CD8-positive, alpha-beta T cell (primary cell): ENCODE measurements at regions of chr10 and their contacts with region 1.

Region 1: DNA sequence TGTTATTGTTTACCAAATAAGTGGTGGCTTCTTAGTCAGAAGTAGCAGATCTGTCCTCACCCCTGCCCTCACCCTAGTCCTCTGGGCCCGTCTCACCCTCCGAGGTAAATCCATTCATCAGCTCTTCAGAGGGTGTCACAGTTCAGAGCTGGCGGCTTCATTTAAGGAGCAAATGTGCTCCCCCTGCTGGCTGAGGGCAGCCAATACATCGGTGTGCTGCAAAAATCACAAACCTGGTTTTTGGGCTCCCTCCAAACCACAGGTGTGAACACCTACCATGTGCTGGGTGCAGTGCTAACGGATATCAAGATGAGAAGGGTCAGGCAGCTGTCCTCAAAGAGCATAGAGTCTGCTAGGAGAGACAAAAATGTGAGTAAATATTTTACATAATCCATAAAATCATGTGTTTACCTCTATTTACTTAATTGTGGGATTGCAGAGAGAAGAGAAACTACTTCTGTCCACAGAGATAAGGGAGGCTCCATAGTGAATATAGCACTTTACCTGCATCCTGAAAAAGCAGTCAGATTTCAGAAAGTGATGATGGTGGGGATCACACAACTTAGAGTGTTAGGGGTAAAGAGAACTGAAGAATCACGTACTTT is 15.5 kb upstream of the CRTAC1 start:
- DNase-seq: peak; percentile 21 to 76 (median 54)
- ATAC-seq: peak; percentile 72
- H3K4me3 ChIP-seq: no peak overlapping the region
- H3K4me3 Mint-ChIP-seq: no peak overlapping the region
- H3K27ac ChIP-seq: no peak overlapping the region
- H3K27ac Mint-ChIP-seq: no peak overlapping the region
- H3K4me1 ChIP-seq: peaks cover 6% of the 10 kb centered on the region
- H3K4me1 Mint-ChIP-seq: peaks cover 4% of the 10 kb centered on the region
- H3K27me3 ChIP-seq: peaks cover 3% of the 10 kb centered on the region in 2 experiments
- H3K27me3 Mint-ChIP-seq: peaks cover 30% of the 10 kb centered on the region
- CTCF ChIP-seq: peak; percentile 93

Region 2: DNA sequence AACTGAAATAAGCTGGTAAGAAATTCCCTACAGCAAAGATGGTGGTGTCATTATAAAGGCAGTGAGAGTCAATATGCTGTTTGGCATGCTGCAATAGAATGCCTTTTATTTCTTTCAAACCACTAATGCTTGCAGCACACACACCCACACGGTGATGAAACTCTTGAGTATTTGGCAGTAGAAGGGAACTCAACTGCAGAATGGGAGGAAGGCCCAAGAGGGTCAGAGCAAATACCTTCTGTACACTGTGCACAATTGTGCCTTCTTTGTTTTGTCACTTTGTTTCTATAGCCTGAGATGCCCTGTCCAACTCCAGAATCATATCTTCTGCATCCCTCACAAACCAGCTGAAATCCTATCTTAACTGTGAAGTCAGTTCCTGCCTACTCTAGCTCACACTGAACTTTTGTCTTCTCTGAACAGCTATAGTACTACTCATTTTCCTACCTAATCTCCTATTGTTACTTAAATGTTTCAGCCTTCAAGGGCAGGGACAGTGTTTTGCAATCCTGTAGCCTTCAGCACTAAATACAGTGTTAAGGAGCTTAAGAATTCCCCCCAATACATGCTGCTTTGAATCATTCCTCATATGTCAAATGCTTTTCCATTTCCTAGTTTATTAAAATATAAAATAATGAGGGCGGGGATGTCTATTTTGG is 569.8 kb before region 1 on chr10:
- CTCF ChIA-PET with region 1: no interaction called
- POLR2A ChIA-PET with region 1: no interaction called
- intact Hi-C with region 1: no loop called
- DNase-seq: no peak
- ATAC-seq: no peak
- H3K4me3 ChIP-seq: no peak overlapping the region
- H3K4me3 Mint-ChIP-seq: no peak overlapping the region
- H3K27ac ChIP-seq: no peak overlapping the region
- H3K27ac Mint-ChIP-seq: peak overlapping the region; percentile 37
- H3K4me1 ChIP-seq: no peaks in the 10 kb centered on the region
- H3K4me1 Mint-ChIP-seq: no peaks in the 10 kb centered on the region
- H3K27me3 ChIP-seq: no peaks in the 10 kb centered on the region
- H3K27me3 Mint-ChIP-seq: no peaks in the 10 kb centered on the region
- CTCF ChIP-seq: no peak

Region 3: GRCh38 chr10:97612386-97612785 is 433.5 kb before region 1 on chr10:
- CTCF ChIA-PET with region 1: no interaction called
- POLR2A ChIA-PET with region 1: no interaction called
- intact Hi-C with region 1: no loop called
- DNase-seq: peak in 2 of 9 experiments; percentile 12 to 22
- ATAC-seq: no peak
- H3K4me3 ChIP-seq: no peak overlapping the region
- H3K4me3 Mint-ChIP-seq: no peak overlapping the region
- H3K27ac ChIP-seq: no peak overlapping the region
- H3K27ac Mint-ChIP-seq: no peak overlapping the region
- H3K4me1 ChIP-seq: no peaks in the 10 kb centered on the region
- H3K4me1 Mint-ChIP-seq: no peaks in the 10 kb centered on the region
- H3K27me3 ChIP-seq: no peaks in the 10 kb centered on the region
- H3K27me3 Mint-ChIP-seq: peaks cover 3% of the 10 kb centered on the region
- CTCF ChIP-seq: no peak

Region 4: DNA sequence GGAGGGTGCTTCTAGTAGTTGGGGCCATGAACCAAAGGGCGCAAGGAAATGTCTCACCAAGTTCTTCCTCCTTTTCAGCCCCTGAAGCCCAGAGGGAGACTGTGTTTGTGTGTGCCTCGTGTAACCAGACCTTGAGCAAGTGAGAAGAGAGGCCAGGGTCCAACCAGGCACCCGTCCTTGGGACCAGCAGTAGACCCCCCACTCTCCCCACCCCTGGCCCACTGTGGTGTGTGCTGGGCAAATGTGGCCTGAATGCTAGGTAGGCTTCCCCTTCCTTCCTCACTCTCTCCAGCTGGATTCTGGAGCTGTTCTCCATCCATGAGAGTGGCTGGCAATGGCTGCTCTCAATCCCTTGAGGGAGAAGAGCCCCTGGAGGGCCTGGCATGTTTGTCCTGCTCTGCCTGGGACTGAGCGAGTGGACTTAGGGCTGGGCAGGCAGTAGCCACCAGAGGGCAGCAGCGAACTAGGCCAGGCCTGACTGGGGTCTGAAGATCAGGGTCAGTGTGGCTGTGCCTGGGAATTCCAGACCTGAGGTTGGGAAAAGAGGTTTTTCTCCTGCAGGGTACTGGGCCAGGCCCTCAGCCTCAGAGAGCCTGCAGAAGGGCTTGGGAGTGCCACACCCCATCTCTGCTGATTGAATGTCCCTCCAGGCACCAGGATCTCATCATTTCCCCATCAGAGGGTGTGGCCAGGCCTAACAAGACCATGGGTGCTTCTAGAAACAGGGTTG is 286.6 kb before region 1 on chr10:
- CTCF ChIA-PET with region 1: no interaction called
- POLR2A ChIA-PET with region 1: no interaction called
- intact Hi-C with region 1: loop called in 1 of 2 experiments (anchors 1 kb)
- DNase-seq: peak in 8 of 9 experiments; percentile 27 to 76 (median 58)
- ATAC-seq: peak; percentile 71
- H3K4me3 ChIP-seq: no peak overlapping the region
- H3K4me3 Mint-ChIP-seq: no peak overlapping the region
- H3K27ac ChIP-seq: no peak overlapping the region
- H3K27ac Mint-ChIP-seq: no peak overlapping the region
- H3K4me1 ChIP-seq: peaks cover 7% of the 10 kb centered on the region
- H3K4me1 Mint-ChIP-seq: peaks cover 3% of the 10 kb centered on the region
- H3K27me3 ChIP-seq: no peaks in the 10 kb centered on the region
- H3K27me3 Mint-ChIP-seq: no peaks in the 10 kb centered on the region
- CTCF ChIP-seq: peak; percentile 50

Region 5: DNA sequence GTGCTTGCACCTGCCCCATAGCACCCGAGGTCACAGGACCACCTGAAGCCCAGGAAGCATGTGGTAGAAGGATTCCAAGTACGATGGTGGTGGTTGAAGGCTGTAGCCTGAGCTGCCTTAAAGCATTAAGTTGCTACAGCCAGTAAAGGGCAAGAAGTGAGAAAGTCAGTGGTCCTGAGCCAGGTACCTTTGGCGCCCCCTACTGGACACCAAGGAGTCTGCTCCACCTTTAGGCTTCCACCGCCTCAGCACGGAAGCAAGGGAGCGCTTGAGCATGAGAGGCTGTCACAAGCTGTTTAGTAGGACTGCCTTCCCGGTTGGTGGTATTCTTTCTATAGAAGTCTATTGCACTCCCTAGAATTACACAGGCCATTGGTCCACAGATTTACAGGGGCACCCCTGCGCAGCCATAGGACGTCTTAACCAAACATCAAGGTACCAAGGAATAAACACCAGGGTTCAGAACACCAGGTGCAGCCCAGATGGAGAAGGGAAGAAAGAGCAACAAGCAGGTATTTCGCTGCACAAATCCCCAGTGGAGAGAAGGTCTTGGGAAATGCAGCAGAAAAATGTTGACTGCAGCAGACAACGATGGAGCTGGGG is 17.6 kb before region 1 on chr10:
- CTCF ChIA-PET with region 1: interaction called, 11 read pairs
- POLR2A ChIA-PET with region 1: no interaction called
- intact Hi-C with region 1: no loop called
- DNase-seq: peak; percentile 25 to 74 (median 62)
- ATAC-seq: peak; percentile 66
- H3K4me3 ChIP-seq: no peak overlapping the region
- H3K4me3 Mint-ChIP-seq: no peak overlapping the region
- H3K27ac ChIP-seq: no peak overlapping the region
- H3K27ac Mint-ChIP-seq: no peak overlapping the region
- H3K4me1 ChIP-seq: peaks cover 4% of the 10 kb centered on the region
- H3K4me1 Mint-ChIP-seq: peaks cover 7% of the 10 kb centered on the region
- H3K27me3 ChIP-seq: peaks cover 5 to 23% of the 10 kb centered on the region in 2 experiments
- H3K27me3 Mint-ChIP-seq: peaks cover 53% of the 10 kb centered on the region
- CTCF ChIP-seq: peak; percentile 60

Region 6: DNA sequence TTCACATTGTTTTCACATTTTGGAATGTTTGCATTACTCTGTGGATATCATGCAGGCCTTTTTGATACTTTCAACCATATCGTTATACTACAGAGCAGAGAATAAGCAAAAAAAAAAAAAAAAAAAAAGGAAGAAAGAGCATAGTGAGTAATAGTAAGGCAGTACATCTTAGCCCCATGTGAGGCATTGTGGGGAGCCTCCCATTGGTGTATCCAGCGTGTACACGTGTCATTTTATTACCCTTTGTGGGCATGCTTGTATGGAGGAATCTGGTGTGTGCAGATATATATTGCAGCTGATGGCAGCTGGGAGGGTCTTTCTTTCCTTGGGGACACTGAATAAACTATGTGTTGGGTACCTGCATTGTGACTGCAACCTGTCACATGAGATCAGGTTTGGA is 108.2 kb after region 1 on chr10:
- CTCF ChIA-PET with region 1: no interaction called
- POLR2A ChIA-PET with region 1: no interaction called
- intact Hi-C with region 1: no loop called
- DNase-seq: no peak
- ATAC-seq: no peak
- H3K4me3 ChIP-seq: no peak overlapping the region
- H3K4me3 Mint-ChIP-seq: no peak overlapping the region
- H3K27ac ChIP-seq: no peak overlapping the region
- H3K27ac Mint-ChIP-seq: no peak overlapping the region
- H3K4me1 ChIP-seq: peaks cover 4% of the 10 kb centered on the region
- H3K4me1 Mint-ChIP-seq: peaks cover 36% of the 10 kb centered on the region
- H3K27me3 ChIP-seq: no peaks in the 10 kb centered on the region
- H3K27me3 Mint-ChIP-seq: no peaks in the 10 kb centered on the region
- CTCF ChIP-seq: no peak

Region 7: GRCh38 chr10:98170249-98171117 is 124.6 kb after region 1 on chr10:
- CTCF ChIA-PET with region 1: no interaction called
- POLR2A ChIA-PET with region 1: no interaction called
- intact Hi-C with region 1: no loop called
- DNase-seq: peak in 4 of 9 experiments; percentile 15 to 57 (median 34)
- ATAC-seq: peak; percentile 54
- H3K4me3 ChIP-seq: no peak overlapping the region
- H3K4me3 Mint-ChIP-seq: no peak overlapping the region
- H3K27ac ChIP-seq: no peak overlapping the region
- H3K27ac Mint-ChIP-seq: peak overlapping the region; percentile 29
- H3K4me1 ChIP-seq: peaks cover 3% of the 10 kb centered on the region
- H3K4me1 Mint-ChIP-seq: peaks cover 27% of the 10 kb centered on the region
- H3K27me3 ChIP-seq: no peaks in the 10 kb centered on the region
- H3K27me3 Mint-ChIP-seq: no peaks in the 10 kb centered on the region
- CTCF ChIP-seq: peak; percentile 84